CD8-positive, alpha-beta T cell (primary cell): ENCODE measurements at regions of chr3 and their contacts with region 1.

Region 1: DNA sequence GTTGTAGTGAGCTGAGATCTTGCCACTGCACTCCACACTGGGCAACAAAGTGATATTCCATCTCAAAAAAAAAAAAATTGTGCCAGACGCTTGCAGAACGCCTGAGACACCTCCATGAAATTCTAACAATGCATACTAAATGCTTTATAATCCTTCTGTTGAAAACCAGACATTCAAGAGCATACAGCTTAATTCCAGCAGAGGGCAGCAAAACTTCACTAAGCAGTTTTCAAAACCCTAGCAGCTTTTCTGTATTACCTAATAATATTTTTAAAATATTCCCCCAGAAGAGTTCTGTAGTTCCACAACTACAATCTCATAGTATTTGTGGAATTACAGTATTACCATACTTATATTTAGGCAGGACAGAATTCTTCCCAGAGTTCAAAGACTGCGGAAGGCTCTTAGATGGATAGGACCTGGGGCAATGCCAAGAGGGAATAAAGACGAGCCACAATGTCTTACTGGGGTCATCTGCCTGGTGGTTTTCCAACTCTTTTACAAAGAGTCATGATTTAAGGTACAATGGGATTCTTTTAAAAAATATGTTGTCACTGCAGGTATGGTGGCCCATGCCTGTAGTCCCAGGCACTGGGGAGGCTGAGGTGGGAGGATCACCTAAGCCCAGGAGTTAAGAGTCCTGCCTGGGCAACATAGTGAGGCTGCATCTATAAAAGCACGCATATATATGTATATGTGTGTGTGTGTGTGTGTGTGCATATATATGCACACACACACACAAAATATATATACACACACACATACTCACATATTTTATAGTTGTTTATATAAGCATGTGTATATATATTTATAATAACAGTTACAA is 19.6 kb upstream of the TASOR start:
- DNase-seq: peak in 7 of 9 experiments; percentile 37 to 86 (median 60)
- ATAC-seq: peak; percentile 79
- H3K4me3 ChIP-seq: no peak overlapping the region
- H3K4me3 Mint-ChIP-seq: no peak overlapping the region
- H3K27ac ChIP-seq: no peak overlapping the region
- H3K27ac Mint-ChIP-seq: no peak overlapping the region
- H3K4me1 ChIP-seq: peaks cover 20% of the 10 kb centered on the region
- H3K4me1 Mint-ChIP-seq: peaks cover 22% of the 10 kb centered on the region
- H3K27me3 ChIP-seq: no peaks in the 10 kb centered on the region
- H3K27me3 Mint-ChIP-seq: no peaks in the 10 kb centered on the region
- CTCF ChIP-seq: peak; percentile 86

Region 2: GRCh38 chr3:56725175-56725574 is 22.5 kb after region 1 on chr3:
- CTCF ChIA-PET with region 1: interaction called, 5 read pairs
- POLR2A ChIA-PET with region 1: interaction called, 5 read pairs
- intact Hi-C with region 1: loop called in 1 of 2 experiments (anchors 2 kb)
- DNase-seq: peak; percentile 25 to 86 (median 66)
- ATAC-seq: peak; percentile 89
- H3K4me3 ChIP-seq: no peak overlapping the region
- H3K4me3 Mint-ChIP-seq: peak overlapping the region; percentile 65
- H3K27ac ChIP-seq: peak overlapping the region in 1 of 2 experiments; percentile 43
- H3K27ac Mint-ChIP-seq: peak overlapping the region; percentile 92
- H3K4me1 ChIP-seq: peaks cover 46% of the 10 kb centered on the region
- H3K4me1 Mint-ChIP-seq: peaks cover 64% of the 10 kb centered on the region
- H3K27me3 ChIP-seq: no peaks in the 10 kb centered on the region
- H3K27me3 Mint-ChIP-seq: no peaks in the 10 kb centered on the region
- CTCF ChIP-seq: no peak

Region 3: DNA sequence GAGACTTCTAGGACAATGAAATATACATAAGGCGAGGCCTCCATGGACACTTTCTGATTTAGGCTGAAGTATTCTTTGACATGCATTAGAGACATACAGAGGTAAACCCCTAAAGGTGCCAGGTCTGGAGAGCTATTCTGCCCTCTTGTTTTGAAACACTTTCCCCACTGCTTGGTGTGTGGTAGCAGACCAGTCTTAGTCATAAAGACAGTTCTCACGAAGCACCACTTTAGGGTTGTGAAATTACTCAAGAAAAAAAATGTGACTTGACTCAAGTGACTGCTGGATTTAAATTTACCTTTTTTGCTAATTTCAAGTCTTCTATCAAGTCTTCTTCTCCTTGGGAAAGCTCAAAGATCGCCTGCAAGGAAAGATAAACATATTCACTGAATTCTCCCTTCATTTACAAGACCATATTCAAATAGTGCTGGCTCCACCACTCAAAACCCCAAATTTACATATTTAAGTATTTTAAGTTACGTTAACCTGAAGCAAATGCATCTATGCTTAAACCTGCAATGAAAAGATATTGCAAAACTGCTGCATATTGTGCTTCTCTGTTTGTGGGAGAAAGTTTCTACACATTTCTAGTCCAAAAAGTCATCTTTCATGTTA is 50.6 kb after region 1 on chr3:
- CTCF ChIA-PET with region 1: interaction called, 16 read pairs
- POLR2A ChIA-PET with region 1: interaction called, 4 read pairs
- intact Hi-C with region 1: no loop called
- DNase-seq: peak in 5 of 9 experiments; percentile 22 to 56 (median 45)
- ATAC-seq: peak; percentile 27
- H3K4me3 ChIP-seq: no peak overlapping the region
- H3K4me3 Mint-ChIP-seq: peak overlapping the region; percentile 47
- H3K27ac ChIP-seq: peak overlapping the region; percentile 62 to 79
- H3K27ac Mint-ChIP-seq: peak overlapping the region; percentile 100
- H3K4me1 ChIP-seq: peaks cover 52% of the 10 kb centered on the region
- H3K4me1 Mint-ChIP-seq: peaks cover 66% of the 10 kb centered on the region
- H3K27me3 ChIP-seq: no peaks in the 10 kb centered on the region
- H3K27me3 Mint-ChIP-seq: no peaks in the 10 kb centered on the region
- CTCF ChIP-seq: no peak

Region 4: GRCh38 chr3:56980798-56981390 is 278.2 kb after region 1 on chr3:
- CTCF ChIA-PET with region 1: interaction called, 16 read pairs
- POLR2A ChIA-PET with region 1: no interaction called
- intact Hi-C with region 1: no loop called
- DNase-seq: peak in 3 of 9 experiments; percentile 11 to 36 (median 22)
- ATAC-seq: peak; percentile 23
- H3K4me3 ChIP-seq: no peak overlapping the region
- H3K4me3 Mint-ChIP-seq: no peak overlapping the region
- H3K27ac ChIP-seq: no peak overlapping the region
- H3K27ac Mint-ChIP-seq: no peak overlapping the region
- H3K4me1 ChIP-seq: peaks cover 2% of the 10 kb centered on the region
- H3K4me1 Mint-ChIP-seq: peaks cover 5% of the 10 kb centered on the region
- H3K27me3 ChIP-seq: no peaks in the 10 kb centered on the region
- H3K27me3 Mint-ChIP-seq: no peaks in the 10 kb centered on the region
- CTCF ChIP-seq: no peak

Region 5: DNA sequence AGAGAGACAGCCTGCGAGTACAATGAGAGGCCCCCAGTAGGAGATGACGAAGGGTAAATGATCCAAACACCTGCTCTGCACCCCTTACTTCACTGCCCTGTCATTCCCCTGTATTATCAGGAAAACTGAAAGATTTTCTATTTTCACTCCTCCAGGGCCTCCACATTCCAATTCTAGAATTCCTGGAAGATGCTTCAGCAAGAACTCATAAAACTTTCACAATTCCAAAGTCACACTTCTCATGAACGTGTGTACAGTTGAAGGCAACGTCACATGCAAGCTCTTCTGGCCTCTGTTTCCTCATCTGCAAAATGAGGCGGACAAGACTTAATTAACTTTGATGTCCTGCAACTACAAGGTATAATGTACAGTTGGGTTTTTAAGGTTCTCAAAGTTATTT is 295.0 kb after region 1 on chr3:
- CTCF ChIA-PET with region 1: interaction called, 263 read pairs
- POLR2A ChIA-PET with region 1: no interaction called
- intact Hi-C with region 1: no loop called
- DNase-seq: no peak
- ATAC-seq: no peak
- H3K4me3 ChIP-seq: no peak overlapping the region
- H3K4me3 Mint-ChIP-seq: no peak overlapping the region
- H3K27ac ChIP-seq: no peak overlapping the region
- H3K27ac Mint-ChIP-seq: no peak overlapping the region
- H3K4me1 ChIP-seq: no peaks in the 10 kb centered on the region
- H3K4me1 Mint-ChIP-seq: peaks cover 2% of the 10 kb centered on the region
- H3K27me3 ChIP-seq: no peaks in the 10 kb centered on the region
- H3K27me3 Mint-ChIP-seq: peaks cover 2% of the 10 kb centered on the region
- CTCF ChIP-seq: no peak